Gastrocnemius medialis (tissue), 4 donors: ENCODE measurements at regions of chr6 and their contacts with region 1.

Region 1: GRCh38 chr6:166684866-166685265 is 57.8 kb upstream of the RPS6KA2 start:
- DNase-seq: no peak
- ATAC-seq: no peak
- H3K4me3 ChIP-seq: no peak overlapping the region
- H3K27ac ChIP-seq: no peak overlapping the region
- H3K4me1 ChIP-seq: no peaks in the 10 kb centered on the region
- H3K27me3 ChIP-seq: no peaks in the 10 kb centered on the region
- CTCF ChIP-seq: no peak
- POLR2A ChIP-seq: no peak

Region 2: GRCh38 chr6:166664135-166664534 is 20.7 kb before region 1 on chr6:
- in situ Hi-C with region 1: no loop called
- intact Hi-C with region 1: loop called (anchors 2 kb)
- DNase-seq: no peak
- ATAC-seq: no peak
- H3K4me3 ChIP-seq: no peak overlapping the region
- H3K27ac ChIP-seq: no peak overlapping the region
- H3K4me1 ChIP-seq: peaks cover 0 to 5% of the 10 kb centered on the region in 2 donors
- H3K27me3 ChIP-seq: no peaks in the 10 kb centered on the region
- CTCF ChIP-seq: no peak
- POLR2A ChIP-seq: no peak

Region 3: DNA sequence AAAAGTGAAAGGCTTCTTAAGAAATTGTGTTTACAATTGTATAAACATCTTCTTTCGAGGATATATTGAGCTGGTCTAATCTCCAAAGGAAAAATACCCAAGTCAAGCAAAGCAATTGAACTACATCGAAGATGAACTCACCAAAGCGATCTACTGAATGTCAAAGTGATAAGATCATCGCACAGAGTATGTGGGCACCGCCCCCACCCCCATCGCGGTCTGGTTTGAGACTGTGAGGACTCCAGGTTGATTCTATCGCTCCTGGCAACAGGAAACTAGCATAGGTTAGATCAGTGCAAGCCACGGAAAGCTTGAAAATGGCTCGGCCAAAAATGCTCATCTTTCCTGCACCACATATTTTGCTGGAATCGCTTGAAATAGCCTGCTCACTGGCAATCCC is 75.4 kb after region 1 on chr6:
- in situ Hi-C with region 1: no loop called
- intact Hi-C with region 1: no loop called
- DNase-seq: no peak
- ATAC-seq: no peak
- H3K4me3 ChIP-seq: no peak overlapping the region
- H3K27ac ChIP-seq: no peak overlapping the region
- H3K4me1 ChIP-seq: no peaks in the 10 kb centered on the region
- H3K27me3 ChIP-seq: peaks cover 13 to 15% (median 14%) of the 10 kb centered on the region in 3 donors
- CTCF ChIP-seq: no peak
- POLR2A ChIP-seq: no peak